ENCODE measurements at regions of chr12 and their contacts with region 1.

Region 1: DNA sequence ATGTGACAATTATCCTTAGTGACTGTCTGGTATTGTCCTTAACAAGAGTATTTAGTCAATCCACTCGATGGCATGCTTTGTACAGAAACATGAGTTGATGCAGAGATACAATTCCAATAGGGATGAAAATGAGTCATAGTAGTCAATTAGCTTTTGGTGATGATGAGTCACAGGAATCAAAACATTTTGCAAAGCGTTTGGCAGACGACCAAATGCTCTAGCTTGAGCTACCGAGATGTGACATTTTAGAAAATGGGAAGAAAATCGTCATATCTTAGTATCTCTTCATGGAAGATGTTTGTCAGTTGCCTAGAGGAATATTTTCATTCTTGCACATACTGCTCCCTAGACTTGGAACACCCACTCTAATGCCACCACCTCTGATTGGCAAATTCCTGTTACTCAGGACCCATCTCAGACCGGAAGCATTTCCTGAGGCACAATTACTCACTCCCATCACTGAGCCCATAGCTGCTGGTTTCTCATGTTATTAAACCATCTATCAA is 95.0 kb downstream of the LMNTD1 start:
- DNase-seq: no peak
- H3K4me3 ChIP-seq: no peak overlapping the region
- H3K27ac ChIP-seq: no peak overlapping the region
- H3K4me1 ChIP-seq: no peaks in the 10 kb centered on the region
- H3K27me3 ChIP-seq: no peaks in the 10 kb centered on the region
- CTCF ChIP-seq: no peak
- EP300 ChIP-seq: no peak
- POLR2A ChIP-seq: no peak

Region 2: GRCh38 chr12:25186038-25186787 is 271.9 kb before region 1 on chr12:
- in situ Hi-C with region 1: no loop called
- intact Hi-C with region 1: no loop called
- DNase-seq: no peak
- H3K4me3 ChIP-seq: peak overlapping the region in 1 of 4 donors; percentile 9
- H3K27ac ChIP-seq: no peak overlapping the region
- H3K4me1 ChIP-seq: no peaks in the 10 kb centered on the region
- H3K27me3 ChIP-seq: no peaks in the 10 kb centered on the region
- CTCF ChIP-seq: no peak
- EP300 ChIP-seq: no peak
- POLR2A ChIP-seq: no peak

Region 3: GRCh38 chr12:25295361-25295760 is 162.7 kb before region 1 on chr12:
- in situ Hi-C with region 1: no loop called
- intact Hi-C with region 1: no loop called
- DNase-seq: no peak
- H3K4me3 ChIP-seq: no peak overlapping the region
- H3K27ac ChIP-seq: no peak overlapping the region
- H3K4me1 ChIP-seq: no peaks in the 10 kb centered on the region
- H3K27me3 ChIP-seq: no peaks in the 10 kb centered on the region
- CTCF ChIP-seq: no peak
- EP300 ChIP-seq: no peak
- POLR2A ChIP-seq: no peak

Region 4: DNA sequence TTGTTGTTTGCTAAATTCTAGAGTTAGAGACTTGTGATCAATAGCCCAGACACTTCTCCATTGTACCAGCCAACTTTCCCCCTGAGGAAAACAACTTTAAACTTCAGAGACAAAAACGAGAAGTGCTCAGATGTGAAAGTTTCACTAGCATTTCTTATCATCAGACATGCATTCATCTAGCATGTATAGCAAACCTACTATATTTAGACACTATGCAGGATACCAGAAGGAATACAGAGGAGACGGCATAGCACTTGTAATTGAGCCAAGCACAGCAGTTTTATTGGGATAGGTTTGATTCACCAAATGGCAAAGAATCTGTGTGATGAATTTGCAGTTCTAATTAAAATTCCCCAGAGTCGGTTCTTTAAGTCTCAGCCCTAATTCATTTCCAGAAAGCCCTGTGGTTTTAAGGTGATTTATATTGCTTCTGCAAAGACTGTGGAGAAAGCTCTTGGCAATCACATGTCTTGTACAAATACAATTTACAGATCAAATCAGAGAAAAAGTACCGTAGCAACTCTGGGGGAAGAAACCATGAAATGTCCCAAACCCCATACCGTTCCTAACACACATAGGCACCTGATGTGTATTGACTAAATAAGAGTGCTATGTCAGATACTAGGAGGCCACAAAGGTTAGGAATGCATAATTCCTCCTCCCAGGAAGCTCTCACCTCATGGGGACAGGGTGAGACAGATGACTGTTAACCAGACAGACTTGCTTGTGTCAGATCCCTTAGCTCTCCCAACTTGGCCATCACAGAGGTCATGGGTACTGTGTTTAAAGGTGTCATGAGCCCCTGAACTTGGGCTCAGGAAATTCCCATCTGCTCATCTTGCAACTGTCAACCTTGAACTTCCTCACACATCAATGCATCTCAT is 137.7 kb before region 1 on chr12:
- in situ Hi-C with region 1: no loop called
- intact Hi-C with region 1: no loop called
- DNase-seq: no peak
- H3K4me3 ChIP-seq: no peak overlapping the region
- H3K27ac ChIP-seq: no peak overlapping the region
- H3K4me1 ChIP-seq: peaks cover 0 to 24% (median 3%) of the 10 kb centered on the region in 4 donors
- H3K27me3 ChIP-seq: no peaks in the 10 kb centered on the region
- CTCF ChIP-seq: no peak
- EP300 ChIP-seq: no peak
- POLR2A ChIP-seq: no peak

Region 5: GRCh38 chr12:25557830-25558436 is 99.8 kb after region 1 on chr12:
- in situ Hi-C with region 1: loop called in 1 of 4 experiments (anchors 25 kb)
- intact Hi-C with region 1: no loop called
- DNase-seq: no peak
- H3K4me3 ChIP-seq: no peak overlapping the region
- H3K27ac ChIP-seq: no peak overlapping the region
- H3K4me1 ChIP-seq: no peaks in the 10 kb centered on the region
- H3K27me3 ChIP-seq: no peaks in the 10 kb centered on the region
- CTCF ChIP-seq: peak in 3 of 5 experiments; percentile 17 to 29 (median 28)
- EP300 ChIP-seq: no peak
- POLR2A ChIP-seq: no peak